ENCODE measurements at regions of chr16 and their contacts with region 1.

Region 1: GRCh38 chr16:27179500-27180072 is 23.7 kb upstream of the KDM8 start:
- DNase-seq: peak; percentile 78 to 93 (median 85)
- H3K4me3 ChIP-seq: no peak overlapping the region
- H3K27ac ChIP-seq: no peak overlapping the region
- H3K4me1 ChIP-seq: no peaks in the 10 kb centered on the region
- H3K27me3 ChIP-seq: no peaks in the 10 kb centered on the region
- CTCF ChIP-seq: peak; percentile 84 to 97 (median 92)
- POLR2A ChIP-seq: no peak

Region 2: GRCh38 chr16:27123795-27124409 is 55.7 kb before region 1 on chr16:
- intact Hi-C with region 1: no loop called
- DNase-seq: no peak
- H3K4me3 ChIP-seq: no peak overlapping the region
- H3K27ac ChIP-seq: no peak overlapping the region
- H3K4me1 ChIP-seq: no peaks in the 10 kb centered on the region
- H3K27me3 ChIP-seq: no peaks in the 10 kb centered on the region
- CTCF ChIP-seq: no peak
- POLR2A ChIP-seq: no peak

Region 3: GRCh38 chr16:27374804-27375425 is 195.3 kb after region 1 on chr16:
- intact Hi-C with region 1: loop called (anchors 5 kb)
- DNase-seq: peak; percentile 53 to 84 (median 70)
- H3K4me3 ChIP-seq: no peak overlapping the region
- H3K27ac ChIP-seq: peak overlapping the region in 2 of 5 donors; percentile 42
- H3K4me1 ChIP-seq: no peaks in the 10 kb centered on the region
- H3K27me3 ChIP-seq: no peaks in the 10 kb centered on the region
- CTCF ChIP-seq: peak in 5 of 6 experiments; percentile 32 to 61 (median 52)
- POLR2A ChIP-seq: no peak

Region 4: DNA sequence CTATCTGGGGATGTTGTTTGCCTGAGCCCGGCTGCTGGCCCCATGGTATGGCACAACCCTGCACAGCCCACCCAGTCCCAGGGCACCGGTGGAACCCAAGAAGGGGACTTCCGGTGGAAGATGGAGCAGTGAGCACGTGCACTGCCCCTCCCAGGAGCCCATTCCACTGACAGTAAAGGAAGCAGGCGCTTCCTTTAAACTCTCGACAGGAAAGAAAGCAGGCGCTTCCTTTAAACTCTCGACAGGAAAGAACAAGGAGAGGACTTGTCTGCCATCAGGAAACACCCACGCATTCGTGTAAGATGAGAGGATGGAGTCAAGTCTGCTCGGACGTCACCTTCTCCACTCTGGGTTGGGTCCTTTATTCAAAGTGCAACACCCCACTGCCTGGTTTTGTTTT is 276.1 kb after region 1 on chr16:
- intact Hi-C with region 1: loop called (anchors 5 to 10 kb)
- DNase-seq: peak in 3 of 7 donors; percentile 34 to 63 (median 34)
- H3K4me3 ChIP-seq: no peak overlapping the region
- H3K27ac ChIP-seq: peak overlapping the region in 1 of 5 donors; percentile 72
- H3K4me1 ChIP-seq: peaks cover 5 to 12% of the 10 kb centered on the region in 2 donors
- H3K27me3 ChIP-seq: no peaks in the 10 kb centered on the region
- CTCF ChIP-seq: no peak
- POLR2A ChIP-seq: no peak

Region 5: GRCh38 chr16:27461483-27462171 is 282.0 kb after region 1 on chr16:
- intact Hi-C with region 1: loop called (anchors 5 to 10 kb)
- DNase-seq: no peak
- H3K4me3 ChIP-seq: no peak overlapping the region
- H3K27ac ChIP-seq: peak overlapping the region in 2 of 5 donors; percentile 57 to 69
- H3K4me1 ChIP-seq: peaks cover 8 to 18% of the 10 kb centered on the region in 2 donors
- H3K27me3 ChIP-seq: no peaks in the 10 kb centered on the region
- CTCF ChIP-seq: no peak
- POLR2A ChIP-seq: no peak